Dendritic cell treated with granulocyte-macrophage colony-stimulating factor and Interleukin-4, amounts not matched to agents 40 ng/mL and 50 ng/mL, for 4 days (primary cell): ENCODE measurements at regions of chr1 and their contacts with region 1.

Region 1: DNA sequence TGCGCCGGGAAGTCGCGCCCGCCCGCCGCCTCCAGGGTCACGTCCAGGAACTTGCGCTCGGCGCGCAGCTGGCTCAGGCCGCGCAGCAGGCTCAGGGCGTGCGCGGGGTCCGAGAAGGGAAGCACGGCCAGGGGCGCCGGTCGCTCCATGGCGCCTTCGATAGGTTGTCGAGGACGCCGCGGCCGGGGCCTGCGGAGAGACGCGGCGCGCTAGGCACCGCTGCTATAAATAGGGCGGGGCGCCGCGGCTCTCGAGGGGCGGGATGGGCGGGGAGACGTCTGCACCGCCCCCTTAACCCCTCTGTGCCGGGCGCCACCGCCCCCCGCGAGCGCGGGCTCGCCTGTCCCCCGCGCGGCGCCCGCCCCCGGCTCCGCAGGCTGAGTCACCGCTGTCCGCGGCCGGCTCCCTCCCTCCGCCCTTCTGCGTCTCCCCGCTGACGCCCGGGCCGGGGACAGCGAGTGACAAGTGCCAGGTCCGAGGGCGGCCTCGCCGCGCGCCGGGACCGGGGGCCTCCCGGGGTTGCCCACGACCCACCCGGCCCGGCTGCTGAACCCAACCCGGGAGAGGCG is at the start of gene KLHL21:
- H3K4me3 Mint-ChIP-seq: peak within 1 kb of the TSS; percentile 92
- H3K27ac Mint-ChIP-seq: peak within 1 kb of the TSS; percentile 98
- H3K4me1 Mint-ChIP-seq: peaks cover 40% of the 10 kb centered on the region
- H3K27me3 Mint-ChIP-seq: peaks cover 3% of the 10 kb centered on the region

Region 2: DNA sequence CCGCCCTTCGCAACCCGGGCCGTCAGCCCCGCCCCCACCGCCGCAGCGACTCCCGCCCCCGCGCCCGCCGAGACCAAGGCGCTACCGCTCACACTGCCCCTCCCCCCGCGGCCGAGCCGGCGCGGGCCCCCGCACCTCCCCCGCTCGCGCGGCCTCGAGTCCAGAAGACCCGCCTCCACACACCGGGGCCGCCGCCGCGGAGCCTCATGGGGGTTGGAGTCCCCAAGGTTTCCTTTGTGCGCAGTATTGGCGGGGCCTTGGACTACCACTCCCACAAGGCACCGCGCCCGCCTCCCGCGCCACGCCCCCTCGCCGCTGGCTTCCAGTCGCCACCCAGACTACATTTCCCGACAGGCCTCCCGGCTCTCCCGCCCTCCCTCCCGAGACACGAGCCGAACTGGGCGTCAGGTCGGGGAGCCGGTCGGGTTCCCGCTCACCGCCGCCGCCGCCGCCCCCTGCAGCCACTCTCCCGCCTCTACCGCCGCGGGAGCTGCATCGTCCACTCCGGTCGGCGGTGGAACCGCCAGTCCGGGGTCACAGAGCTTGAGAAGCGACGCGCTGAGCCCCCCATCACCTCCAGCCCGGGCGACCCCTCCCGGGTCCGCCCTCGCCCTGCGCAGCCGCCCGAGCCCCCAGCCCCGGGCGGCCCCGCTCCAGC is 10.7 kb after region 1 on chr1 and contains the start of gene PHF13:
- intact Hi-C with region 1: loop called (anchors 1 kb)
- H3K4me3 Mint-ChIP-seq: peak within 1 kb of the TSS; percentile 92
- H3K27ac Mint-ChIP-seq: peak within 1 kb of the TSS; percentile 83
- H3K4me1 Mint-ChIP-seq: peaks cover 33% of the 10 kb centered on the region
- H3K27me3 Mint-ChIP-seq: peaks cover 8% of the 10 kb centered on the region

Region 3: DNA sequence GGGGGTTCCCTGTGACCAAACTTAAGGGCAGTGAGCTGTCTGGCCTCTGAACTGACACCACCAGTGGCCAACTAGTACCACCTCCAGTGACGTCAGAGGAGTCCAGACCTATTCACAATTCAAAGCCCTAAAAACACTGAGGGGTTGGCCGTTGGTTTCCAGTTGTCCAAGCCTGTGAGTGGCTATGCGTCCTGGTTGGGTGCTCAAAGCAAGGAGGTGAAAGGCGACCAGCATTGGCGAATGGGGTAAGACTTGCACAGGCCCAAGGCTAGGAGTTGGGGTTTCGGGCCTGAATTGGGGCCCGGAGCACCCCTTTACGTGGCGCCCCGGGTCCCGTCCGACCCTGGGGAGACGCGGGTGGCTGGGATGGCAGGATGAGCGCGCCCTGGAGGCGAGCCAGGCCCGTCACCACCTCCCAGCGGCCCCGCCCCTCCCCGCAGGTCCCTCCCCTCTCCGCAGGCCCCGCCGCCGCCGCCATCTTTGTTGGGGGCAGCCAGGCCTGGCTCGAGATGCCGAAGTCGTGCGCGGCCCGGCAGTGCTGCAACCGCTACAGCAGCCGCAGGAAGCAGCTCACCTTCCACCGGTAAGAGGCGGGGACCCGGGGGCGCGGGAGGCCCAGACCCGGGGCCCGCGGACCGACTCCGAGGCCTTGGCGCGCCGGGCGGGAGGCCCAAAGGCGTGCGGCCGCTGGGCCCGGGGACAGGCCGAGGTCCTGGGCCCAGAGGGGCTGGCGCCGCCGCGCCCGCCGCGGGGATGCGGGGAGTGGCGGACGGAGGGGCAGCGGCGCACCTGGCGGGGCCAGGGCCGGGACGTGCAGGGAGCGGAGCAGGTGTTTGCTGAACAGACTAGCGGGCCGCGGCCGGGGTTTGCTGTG is 22.2 kb after region 1 on chr1 and contains the start of gene THAP3:
- intact Hi-C with region 1: no loop called
- H3K4me3 Mint-ChIP-seq: peak within 1 kb of the TSS; percentile 85
- H3K27ac Mint-ChIP-seq: peak within 1 kb of the TSS; percentile 81
- H3K4me1 Mint-ChIP-seq: peaks cover 40% of the 10 kb centered on the region
- H3K27me3 Mint-ChIP-seq: no peaks in the 10 kb centered on the region

Region 4: DNA sequence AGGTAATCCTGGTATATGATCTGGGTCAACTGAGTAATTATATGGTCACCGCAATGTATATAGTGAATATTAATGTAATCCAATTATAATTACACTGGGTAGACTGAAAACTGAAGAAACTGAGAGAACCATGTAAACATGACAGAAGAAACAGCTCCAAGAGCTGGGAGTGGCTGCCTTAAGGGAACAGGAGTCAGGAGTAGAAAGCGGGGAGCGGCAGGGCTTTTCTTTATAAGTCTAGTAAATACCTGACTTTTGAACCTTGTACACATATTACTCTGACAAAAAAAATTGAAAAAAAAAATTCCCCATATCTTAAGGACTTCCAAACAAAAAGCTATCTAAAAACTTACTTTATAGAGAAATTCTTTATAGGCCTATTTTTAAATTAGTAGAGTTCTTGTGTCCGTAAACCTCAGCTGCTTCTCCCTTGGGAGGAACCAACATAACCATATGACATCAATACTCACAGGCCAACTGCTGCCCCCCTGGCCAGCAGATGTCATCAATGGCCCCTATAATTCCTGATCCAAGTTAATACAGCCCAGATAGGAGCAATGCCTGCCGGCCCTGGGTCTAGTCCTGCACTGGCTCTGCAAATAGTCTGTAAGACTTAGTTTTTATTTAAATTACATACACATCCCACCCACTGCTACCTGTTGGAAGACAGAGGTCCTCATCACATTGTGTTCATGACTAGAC is 55.8 kb after region 1 on chr1:
- intact Hi-C with region 1: no loop called
- H3K4me3 Mint-ChIP-seq: no peak overlapping the region
- H3K27ac Mint-ChIP-seq: no peak overlapping the region
- H3K4me1 Mint-ChIP-seq: no peaks in the 10 kb centered on the region
- H3K27me3 Mint-ChIP-seq: no peaks in the 10 kb centered on the region